PC-9 (cell line): ENCODE measurements at regions of chr5 and their contacts with region 1.

Region 1: GRCh38 chr5:33180900-33181299 is 259.9 kb upstream of the TARS1 start:
- DNase-seq: peak in 1 of 2 experiments; percentile 29
- H3K4me3 ChIP-seq: no peak overlapping the region
- H3K27ac ChIP-seq: no peak overlapping the region
- H3K4me1 ChIP-seq: no peaks in the 10 kb centered on the region
- H3K27me3 ChIP-seq: no peaks in the 10 kb centered on the region
- CTCF ChIP-seq: peak; percentile 79

Region 2: GRCh38 chr5:32585446-32586275 is 595.2 kb before region 1 on chr5 and contains the start of gene SUB1:
- CTCF ChIA-PET with region 1: interaction called, 11 read pairs
- POLR2A ChIA-PET with region 1: no interaction called
- intact Hi-C with region 1: no loop called
- DNase-seq: peak; percentile 87 to 98
- H3K4me3 ChIP-seq: peak within 1 kb of the TSS; percentile 84
- H3K27ac ChIP-seq: peak within 1 kb of the TSS; percentile 77
- H3K4me1 ChIP-seq: peaks cover 10% of the 10 kb centered on the region
- H3K27me3 ChIP-seq: no peaks in the 10 kb centered on the region
- CTCF ChIP-seq: no peak
- total RNA-seq, gene SUB1: 314 and 328 TPM in 2 replicates

Region 3: DNA sequence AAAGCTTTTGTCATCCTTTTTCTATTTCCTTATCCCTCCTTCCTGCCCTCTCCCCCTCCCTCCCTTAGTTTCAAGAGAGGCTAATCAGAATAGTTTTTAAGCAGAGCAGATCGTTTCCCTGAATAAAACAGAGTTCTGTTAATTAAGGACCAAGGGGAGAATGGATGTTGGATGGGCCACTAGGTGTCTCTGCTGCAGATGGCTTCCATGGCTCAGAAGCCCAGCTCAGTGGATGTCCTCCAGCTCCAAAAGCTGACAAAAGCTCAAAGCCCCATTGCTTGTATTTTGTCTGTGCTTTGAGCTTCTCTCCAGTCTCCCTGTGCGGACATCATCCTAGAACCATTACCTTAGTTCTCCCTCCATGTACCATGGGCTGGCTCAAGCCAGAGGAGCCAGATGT is 490.7 kb before region 1 on chr5:
- CTCF ChIA-PET with region 1: no interaction called
- POLR2A ChIA-PET with region 1: no interaction called
- intact Hi-C with region 1: loop called (anchors 5 kb)
- DNase-seq: no peak
- H3K4me3 ChIP-seq: no peak overlapping the region
- H3K27ac ChIP-seq: no peak overlapping the region
- H3K4me1 ChIP-seq: no peaks in the 10 kb centered on the region
- H3K27me3 ChIP-seq: no peaks in the 10 kb centered on the region
- CTCF ChIP-seq: peak; percentile 59; the same call in 1 of the 2 replicates

Region 4: DNA sequence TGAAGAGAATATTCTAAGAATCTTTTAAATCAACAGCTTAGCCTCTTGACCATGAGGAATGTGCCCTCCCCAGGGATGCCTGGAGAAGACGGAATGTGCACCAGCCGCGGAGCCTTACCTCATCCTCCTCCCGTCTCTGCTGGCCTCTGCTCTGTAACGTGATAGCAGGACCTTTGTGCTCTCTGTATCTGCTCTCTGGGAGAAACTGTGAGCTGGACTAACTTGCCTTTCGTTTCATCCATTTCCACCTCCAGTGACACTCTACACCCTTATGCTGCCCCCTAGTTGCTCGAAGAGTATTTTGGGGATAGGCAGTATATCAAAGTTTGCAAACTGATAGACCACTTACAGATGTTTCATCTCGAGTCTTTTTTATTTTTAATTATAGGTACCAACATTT is 328.4 kb before region 1 on chr5:
- CTCF ChIA-PET with region 1: no interaction called
- POLR2A ChIA-PET with region 1: no interaction called
- intact Hi-C with region 1: loop called (anchors 1 kb)
- DNase-seq: peak in 1 of 2 experiments; percentile 91
- H3K4me3 ChIP-seq: no peak overlapping the region
- H3K27ac ChIP-seq: no peak overlapping the region
- H3K4me1 ChIP-seq: peaks cover 6% of the 10 kb centered on the region; the same call in 1 of the 2 replicates
- H3K27me3 ChIP-seq: peaks cover 10% of the 10 kb centered on the region; the same call in 1 of the 2 replicates
- CTCF ChIP-seq: peak; percentile 66

Region 5: DNA sequence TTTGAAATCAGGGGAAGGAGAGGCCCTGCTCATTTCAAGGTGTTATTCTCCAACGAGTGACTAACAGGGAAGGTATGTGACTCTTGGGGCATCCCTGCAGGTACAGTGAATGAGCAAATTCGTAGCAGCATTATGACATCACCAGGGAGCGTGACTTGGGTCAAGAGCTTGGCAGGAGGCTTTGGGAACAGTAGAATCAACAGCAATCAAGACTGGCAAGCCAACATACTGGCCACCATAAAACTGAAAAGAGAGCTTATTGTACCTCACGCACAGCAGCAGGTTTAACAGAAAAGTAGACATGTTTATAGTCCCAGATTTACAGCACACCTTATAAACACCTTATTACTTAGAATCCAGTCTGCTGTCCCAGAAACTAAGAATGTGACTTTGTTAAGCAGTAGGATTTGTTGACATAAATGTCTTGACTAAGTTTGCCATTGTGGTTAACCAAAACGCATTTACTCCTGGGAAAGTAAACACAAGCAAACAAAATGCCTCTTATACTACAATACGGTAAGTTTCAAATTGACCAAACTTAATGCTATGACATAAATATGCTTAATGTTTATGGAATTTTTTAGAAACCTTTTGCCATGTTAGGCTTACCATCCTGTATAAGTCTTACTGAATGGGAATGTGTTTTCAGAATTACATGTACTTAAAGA is 172.0 kb before region 1 on chr5:
- CTCF ChIA-PET with region 1: no interaction called
- POLR2A ChIA-PET with region 1: no interaction called
- intact Hi-C with region 1: loop called (anchors 2 kb)
- DNase-seq: peak; percentile 73 to 92
- H3K4me3 ChIP-seq: no peak overlapping the region
- H3K27ac ChIP-seq: peak overlapping the region; percentile 48
- H3K4me1 ChIP-seq: peaks cover 14% of the 10 kb centered on the region
- H3K27me3 ChIP-seq: no peaks in the 10 kb centered on the region
- CTCF ChIP-seq: no peak

Region 6: GRCh38 chr5:33148076-33148501 is 32.8 kb before region 1 on chr5:
- CTCF ChIA-PET with region 1: interaction called, 3 read pairs
- POLR2A ChIA-PET with region 1: no interaction called
- intact Hi-C with region 1: loop called (anchors 1 kb)
- DNase-seq: peak; percentile 73 to 81
- H3K4me3 ChIP-seq: peak overlapping the region; percentile 32; the same call in 1 of the 2 replicates
- H3K27ac ChIP-seq: peak overlapping the region; percentile 81
- H3K4me1 ChIP-seq: peaks cover 31% of the 10 kb centered on the region
- H3K27me3 ChIP-seq: no peaks in the 10 kb centered on the region
- CTCF ChIP-seq: no peak

Region 7: DNA sequence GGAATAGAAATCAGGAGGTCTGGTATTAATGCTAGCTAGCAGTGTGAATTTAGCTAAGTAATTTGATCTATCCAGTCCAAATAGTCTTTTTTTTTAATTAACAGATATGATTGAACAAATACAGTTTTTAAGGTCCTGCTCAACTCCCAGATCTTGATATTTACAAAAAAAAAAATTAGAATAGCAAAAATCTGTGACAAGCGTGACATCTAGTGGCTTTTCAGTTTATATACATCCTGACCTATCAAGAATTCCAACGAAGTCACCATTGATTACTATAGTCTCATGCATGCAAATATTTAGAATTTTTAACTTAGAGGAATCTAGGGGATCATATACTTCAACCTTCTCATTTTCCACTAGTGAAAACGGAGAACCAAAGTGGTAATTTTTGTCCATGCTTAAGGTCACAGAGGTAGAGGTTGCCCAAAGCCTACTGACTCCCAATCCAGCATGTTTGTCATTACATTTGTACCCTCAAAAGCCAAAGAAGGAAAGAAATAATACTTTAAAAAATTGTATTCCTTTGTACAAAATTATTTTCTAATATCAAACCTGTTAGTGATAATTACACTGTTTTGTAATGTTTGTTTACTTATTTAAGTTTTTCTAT is 242.2 kb after region 1 on chr5:
- CTCF ChIA-PET with region 1: no interaction called
- POLR2A ChIA-PET with region 1: no interaction called
- intact Hi-C with region 1: loop called (anchors 2 kb)
- DNase-seq: no peak
- H3K4me3 ChIP-seq: no peak overlapping the region
- H3K27ac ChIP-seq: no peak overlapping the region
- H3K4me1 ChIP-seq: no peaks in the 10 kb centered on the region
- H3K27me3 ChIP-seq: no peaks in the 10 kb centered on the region
- CTCF ChIP-seq: peak; percentile 84